Activated T-helper 1 cell treated with anti-CD3 and anti-CD28 coated beads, Interleukin-12 subunit alpha, Interleukin-12 subunit beta, Interleukin-2, Interleukin-4 antibody, amounts not matched to agents 30 ng/mL and 10 ng/mL and 1 ng/mL, durations not matched to agents 14 hours and 24 hours and 36 hours (primary cell): ENCODE measurements at regions of chr1 and their contacts with region 1.

Region 1: DNA sequence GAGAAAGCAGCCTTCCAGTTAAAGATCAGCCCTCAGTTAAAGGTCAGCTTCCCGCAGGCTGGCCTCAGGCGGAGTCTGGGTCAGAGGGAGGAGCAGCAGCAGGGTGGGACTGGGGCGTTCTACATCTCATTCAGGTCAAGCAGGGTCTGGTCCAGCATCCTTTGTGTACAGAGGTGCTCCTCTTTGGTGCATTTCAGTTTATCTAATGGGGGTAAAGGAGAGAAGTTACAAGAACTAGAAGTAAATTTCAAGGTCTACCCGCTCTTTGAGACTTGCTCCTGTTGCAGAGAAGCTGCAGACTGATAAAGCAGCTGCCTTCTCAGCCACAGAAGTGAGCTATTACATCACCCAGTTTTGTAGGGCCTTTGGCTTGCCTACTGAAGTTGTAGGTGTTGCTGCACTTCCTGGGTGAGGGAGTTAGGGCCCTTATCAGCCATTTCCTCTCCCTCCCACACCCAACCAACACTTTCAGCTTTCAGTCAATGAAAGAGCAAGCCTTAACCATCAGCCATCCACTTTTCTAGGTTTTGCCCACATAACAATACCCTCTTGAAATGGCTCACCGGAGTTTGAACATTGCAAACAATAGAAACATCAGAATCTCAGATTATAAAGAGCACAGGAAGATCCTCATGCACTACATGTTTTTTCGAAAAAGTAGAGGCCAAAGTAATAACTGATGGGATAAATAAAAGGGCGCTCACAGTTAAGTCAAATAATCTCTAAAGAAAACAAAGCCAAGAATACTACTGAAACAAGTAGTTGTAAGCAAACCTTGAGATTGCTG is 2.8 kb upstream of the NUP210L start:
- DNase-seq: peak; percentile 79
- H3K4me3 Mint-ChIP-seq: peak overlapping the region; percentile 62
- H3K27ac Mint-ChIP-seq: peak overlapping the region; percentile 70
- H3K4me1 Mint-ChIP-seq: peaks cover 65% of the 10 kb centered on the region
- H3K27me3 Mint-ChIP-seq: no peaks in the 10 kb centered on the region

Region 2: GRCh38 chr1:154014154-154014910 is 143.4 kb before region 1 on chr1:
- intact Hi-C with region 1: no loop called
- DNase-seq: no peak
- H3K4me3 Mint-ChIP-seq: no peak overlapping the region
- H3K27ac Mint-ChIP-seq: no peak overlapping the region
- H3K4me1 Mint-ChIP-seq: no peaks in the 10 kb centered on the region
- H3K27me3 Mint-ChIP-seq: peaks cover 8% of the 10 kb centered on the region

Region 3: GRCh38 chr1:154170547-154171222 is 13.0 kb after region 1 on chr1:
- intact Hi-C with region 1: loop called (anchors 1 kb)
- DNase-seq: no peak
- H3K4me3 Mint-ChIP-seq: peak overlapping the region; percentile 47
- H3K27ac Mint-ChIP-seq: peak overlapping the region; percentile 87
- H3K4me1 Mint-ChIP-seq: peaks cover 46% of the 10 kb centered on the region
- H3K27me3 Mint-ChIP-seq: no peaks in the 10 kb centered on the region